Activated B cell treated with CpG ODN at 0.5 μM for 24 hours (primary cell): ENCODE measurements at regions of chr12 and their contacts with region 1.

Region 1: DNA sequence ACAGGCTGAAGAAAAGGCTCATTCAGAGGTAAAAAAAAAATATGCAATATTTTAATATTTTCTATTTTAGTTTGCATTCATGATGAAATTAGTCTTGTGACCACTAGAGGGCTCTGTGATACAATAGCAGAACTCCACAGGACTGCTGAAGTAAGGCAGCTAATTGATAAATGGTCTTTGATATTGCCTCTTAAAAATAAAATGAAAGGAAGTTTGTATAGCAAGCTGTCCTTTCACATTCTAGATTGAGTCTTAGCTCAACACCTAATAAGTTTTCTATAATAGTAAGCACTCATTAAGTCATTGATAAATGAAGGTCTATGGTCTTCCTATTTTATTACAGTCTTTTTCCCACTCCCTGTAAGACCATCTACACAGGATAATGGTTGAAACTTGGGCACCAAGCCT is 315.7 kb downstream of the NAV3 start:
- DNase-seq: no peak
- ATAC-seq: peak; percentile 47
- H3K4me3 Mint-ChIP-seq: no peak overlapping the region
- H3K27ac Mint-ChIP-seq: no peak overlapping the region
- H3K4me1 Mint-ChIP-seq: no peaks in the 10 kb centered on the region
- H3K27me3 Mint-ChIP-seq: no peaks in the 10 kb centered on the region
- CTCF ChIP-seq: peak; percentile 69

Region 2: DNA sequence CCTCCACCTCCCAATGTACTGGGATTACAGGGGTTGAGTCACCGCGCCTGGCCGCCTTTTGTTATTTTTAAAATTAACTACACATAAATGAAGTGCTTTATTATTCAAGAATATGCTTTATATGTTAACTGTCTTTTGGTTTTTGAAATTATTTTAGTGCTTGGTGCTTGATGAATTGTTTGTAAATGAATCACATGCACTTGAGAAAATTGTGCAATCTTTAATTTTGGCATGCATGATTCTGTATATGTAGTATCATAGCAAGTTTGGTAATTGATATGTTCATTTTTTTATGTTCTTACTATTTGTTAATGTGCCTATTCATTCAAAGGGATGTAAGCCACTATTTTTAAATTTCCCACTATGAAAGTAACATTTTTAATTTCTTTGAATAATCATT is 125.2 kb after region 1 on chr12:
- CTCF ChIA-PET with region 1: no interaction called
- POLR2A ChIA-PET with region 1: no interaction called
- intact Hi-C with region 1: no loop called
- DNase-seq: no peak
- ATAC-seq: no peak
- H3K4me3 Mint-ChIP-seq: no peak overlapping the region
- H3K27ac Mint-ChIP-seq: no peak overlapping the region
- H3K4me1 Mint-ChIP-seq: no peaks in the 10 kb centered on the region
- H3K27me3 Mint-ChIP-seq: no peaks in the 10 kb centered on the region
- CTCF ChIP-seq: no peak

Region 3: GRCh38 chr12:79174626-79175025 is 1028.3 kb after region 1 on chr12:
- CTCF ChIA-PET with region 1: interaction called, 5 read pairs
- POLR2A ChIA-PET with region 1: no interaction called
- intact Hi-C with region 1: loop called (anchors 2 kb)
- DNase-seq: no peak
- ATAC-seq: no peak
- H3K4me3 Mint-ChIP-seq: no peak overlapping the region
- H3K27ac Mint-ChIP-seq: no peak overlapping the region
- H3K4me1 Mint-ChIP-seq: no peaks in the 10 kb centered on the region
- H3K27me3 Mint-ChIP-seq: no peaks in the 10 kb centered on the region
- CTCF ChIP-seq: no peak

Region 4: GRCh38 chr12:79344855-79345847 is 1198.8 kb after region 1 on chr12:
- CTCF ChIA-PET with region 1: no interaction called
- POLR2A ChIA-PET with region 1: no interaction called
- intact Hi-C with region 1: loop called (anchors 1 kb)
- DNase-seq: no peak
- ATAC-seq: peak; percentile 40
- H3K4me3 Mint-ChIP-seq: no peak overlapping the region
- H3K27ac Mint-ChIP-seq: no peak overlapping the region
- H3K4me1 Mint-ChIP-seq: no peaks in the 10 kb centered on the region
- H3K27me3 Mint-ChIP-seq: no peaks in the 10 kb centered on the region
- CTCF ChIP-seq: no peak

Region 5: DNA sequence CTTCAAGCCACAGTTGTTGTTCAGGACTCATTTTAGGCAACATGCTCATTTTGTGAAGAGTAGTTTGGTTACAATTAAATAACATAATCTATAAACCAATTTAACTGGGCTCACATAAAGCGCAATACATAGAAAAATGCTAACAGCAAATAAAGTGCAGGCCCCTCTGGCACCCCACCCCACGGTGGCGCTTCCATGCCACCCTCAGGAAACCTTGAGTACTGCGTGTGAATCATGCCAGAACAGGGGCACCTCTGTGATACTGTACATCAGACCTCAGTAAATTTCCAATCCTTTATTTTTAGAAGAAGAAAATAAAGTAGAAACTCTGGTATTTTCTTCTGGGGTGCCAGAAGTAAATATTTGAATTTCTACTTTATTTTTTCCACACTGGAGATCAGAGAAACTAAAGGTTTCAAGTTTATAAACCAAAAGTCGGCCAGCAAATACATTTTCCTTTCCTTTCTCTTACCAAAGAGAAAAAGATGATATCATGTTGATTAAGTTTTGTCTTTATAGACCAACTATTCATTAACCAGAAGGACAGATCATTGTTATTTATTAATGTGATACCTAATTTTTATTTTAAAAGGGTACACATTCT is 1227.6 kb after region 1 on chr12:
- CTCF ChIA-PET with region 1: interaction called, 5 read pairs
- POLR2A ChIA-PET with region 1: no interaction called
- intact Hi-C with region 1: loop called (anchors 1 kb)
- DNase-seq: no peak
- ATAC-seq: peak; percentile 47
- H3K4me3 Mint-ChIP-seq: no peak overlapping the region
- H3K27ac Mint-ChIP-seq: no peak overlapping the region
- H3K4me1 Mint-ChIP-seq: no peaks in the 10 kb centered on the region
- H3K27me3 Mint-ChIP-seq: no peaks in the 10 kb centered on the region
- CTCF ChIP-seq: no peak